MCF 10A (cell line): ENCODE measurements at regions of chr12 and their contacts with region 1.

Region 1: GRCh38 chr12:79420146-79420618 is 270.6 kb downstream of the PAWR start:
- DNase-seq: peak; percentile 79
- H3K4me3 Mint-ChIP-seq: no peak overlapping the region
- H3K27ac Mint-ChIP-seq: peak overlapping the region; percentile 49
- H3K4me1 Mint-ChIP-seq: peaks cover 43% of the 10 kb centered on the region
- H3K27me3 Mint-ChIP-seq: no peaks in the 10 kb centered on the region
- CTCF ChIP-seq: peak; percentile 58

Region 2: GRCh38 chr12:79217306-79217705 is 202.9 kb before region 1 on chr12:
- CTCF ChIA-PET with region 1: no interaction called
- POLR2A ChIA-PET with region 1: no interaction called
- intact Hi-C with region 1: no loop called
- DNase-seq: no peak
- H3K4me3 Mint-ChIP-seq: no peak overlapping the region
- H3K27ac Mint-ChIP-seq: no peak overlapping the region
- H3K4me1 Mint-ChIP-seq: no peaks in the 10 kb centered on the region
- H3K27me3 Mint-ChIP-seq: no peaks in the 10 kb centered on the region
- CTCF ChIP-seq: no peak

Region 3: GRCh38 chr12:79262938-79263337 is 157.2 kb before region 1 on chr12:
- CTCF ChIA-PET with region 1: no interaction called
- POLR2A ChIA-PET with region 1: no interaction called
- intact Hi-C with region 1: no loop called
- DNase-seq: peak; percentile 11
- H3K4me3 Mint-ChIP-seq: no peak overlapping the region
- H3K27ac Mint-ChIP-seq: no peak overlapping the region
- H3K4me1 Mint-ChIP-seq: no peaks in the 10 kb centered on the region
- H3K27me3 Mint-ChIP-seq: no peaks in the 10 kb centered on the region
- CTCF ChIP-seq: no peak

Region 4: DNA sequence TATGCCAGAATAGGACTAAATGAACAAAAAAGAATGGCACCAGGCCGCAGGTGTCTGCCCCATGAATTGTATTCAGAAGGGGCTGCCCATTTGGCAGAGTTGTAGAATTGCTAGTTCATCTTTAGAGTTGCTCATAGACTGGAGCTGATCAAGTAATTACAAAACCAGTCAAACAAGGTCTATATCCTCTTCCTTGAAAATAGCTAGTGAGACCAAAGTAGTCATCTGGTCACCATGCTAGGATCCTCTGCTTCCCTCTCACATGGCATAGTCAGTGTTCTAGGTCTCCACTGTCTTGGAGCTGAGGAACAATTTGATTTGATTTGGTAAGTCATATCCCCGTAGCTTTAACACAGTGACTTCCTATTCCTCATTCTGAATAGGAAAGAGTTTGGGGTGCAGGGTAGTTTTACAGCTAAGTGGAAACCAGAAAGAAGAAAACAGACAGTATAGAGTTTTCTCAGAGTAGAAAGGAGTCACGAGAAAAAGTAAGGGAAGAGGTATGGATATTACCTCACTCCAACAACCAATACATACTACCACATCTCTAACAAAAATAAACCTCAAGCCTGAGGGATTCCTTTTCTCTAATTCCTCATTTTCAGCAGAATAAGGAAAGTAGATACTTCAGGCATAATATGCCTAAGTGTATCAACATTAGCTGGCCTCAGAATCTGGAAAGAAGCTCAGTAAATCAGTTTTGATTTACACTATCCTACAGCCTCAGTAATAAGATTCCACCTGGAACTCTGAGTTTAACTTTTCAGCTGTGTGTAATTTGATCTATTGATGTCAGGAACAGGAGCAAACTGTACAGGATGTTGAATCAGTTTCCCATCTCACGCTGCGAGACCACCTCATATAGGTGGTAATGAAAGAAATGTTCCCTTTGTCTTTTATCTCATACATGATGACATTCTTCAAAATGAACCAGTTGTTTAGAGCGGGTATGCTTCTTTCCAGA is 18.6 kb after region 1 on chr12:
- CTCF ChIA-PET with region 1: interaction called, 32 read pairs
- POLR2A ChIA-PET with region 1: interaction called, 5 read pairs
- intact Hi-C with region 1: no loop called
- DNase-seq: no peak
- H3K4me3 Mint-ChIP-seq: no peak overlapping the region
- H3K27ac Mint-ChIP-seq: no peak overlapping the region
- H3K4me1 Mint-ChIP-seq: peaks cover 8% of the 10 kb centered on the region
- H3K27me3 Mint-ChIP-seq: no peaks in the 10 kb centered on the region
- CTCF ChIP-seq: no peak

Region 5: DNA sequence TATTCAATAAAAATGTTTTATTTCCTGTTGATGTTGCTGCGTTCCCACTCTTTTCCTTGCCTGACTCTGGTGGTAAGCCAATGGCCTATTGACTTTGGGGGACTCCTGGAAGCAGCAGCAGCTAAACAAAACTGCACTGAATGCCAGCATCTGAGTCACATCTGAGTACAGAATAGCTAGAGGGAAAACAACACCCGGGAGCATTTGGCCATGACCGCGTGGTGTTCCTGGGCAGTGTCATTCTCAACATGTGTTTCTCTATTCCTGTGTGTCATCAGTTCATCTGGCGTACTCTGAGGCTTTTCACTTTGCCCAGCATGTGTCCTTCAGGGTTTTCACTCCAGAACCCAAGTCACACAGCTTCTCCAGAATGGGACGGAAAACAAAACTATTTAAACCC is 31.8 kb after region 1 on chr12:
- CTCF ChIA-PET with region 1: interaction called, 24 read pairs
- POLR2A ChIA-PET with region 1: interaction called, 4 read pairs
- intact Hi-C with region 1: no loop called
- DNase-seq: peak; percentile 94
- H3K4me3 Mint-ChIP-seq: peak overlapping the region; percentile 60
- H3K27ac Mint-ChIP-seq: peak overlapping the region; percentile 94
- H3K4me1 Mint-ChIP-seq: peaks cover 38% of the 10 kb centered on the region
- H3K27me3 Mint-ChIP-seq: no peaks in the 10 kb centered on the region
- CTCF ChIP-seq: no peak

Region 6: DNA sequence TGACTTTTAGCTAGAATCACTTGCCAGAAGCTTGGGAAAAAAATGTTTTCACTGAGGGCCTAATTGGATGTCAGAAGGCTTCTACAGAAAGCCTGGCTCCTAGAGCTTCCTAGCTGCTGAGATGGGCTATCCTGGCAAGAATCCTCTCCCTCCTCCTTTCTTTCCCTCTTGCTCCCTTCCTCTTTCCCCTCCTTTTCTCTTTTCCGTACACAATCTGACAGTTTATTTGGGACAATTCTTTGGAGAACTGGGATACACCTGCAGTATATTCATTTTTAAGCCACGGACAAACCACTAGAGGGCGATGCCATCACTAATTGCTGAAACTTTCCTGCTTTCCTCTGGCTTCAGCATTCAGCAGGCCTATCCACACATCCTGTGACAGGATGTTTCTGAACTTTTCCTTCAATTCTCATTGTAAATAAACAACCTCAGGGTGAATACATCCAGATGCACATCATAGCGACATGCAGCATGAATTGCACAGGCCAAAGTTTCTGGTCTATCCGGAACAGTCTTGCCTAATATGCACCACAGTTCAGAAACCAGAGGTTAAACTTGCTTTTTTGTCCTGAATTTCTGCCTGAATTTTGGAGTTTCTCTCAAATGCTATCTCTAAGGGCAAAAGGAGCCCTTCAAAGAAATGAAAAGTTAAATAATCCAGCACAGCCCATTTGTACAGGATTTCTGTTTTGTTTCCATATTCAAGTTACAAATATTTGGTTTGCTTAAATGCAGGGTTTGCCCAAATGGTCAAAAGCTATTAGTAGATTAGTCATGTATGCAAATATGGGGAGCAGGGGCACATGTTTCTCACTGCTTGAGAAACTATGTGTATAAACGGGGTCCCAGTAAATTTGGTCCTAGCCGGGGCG is 127.8 kb after region 1 on chr12:
- CTCF ChIA-PET with region 1: interaction called, 43 read pairs
- POLR2A ChIA-PET with region 1: interaction called, 24 read pairs
- intact Hi-C with region 1: loop called (anchors 1 kb)
- DNase-seq: peak; percentile 79
- H3K4me3 Mint-ChIP-seq: peak overlapping the region; percentile 51
- H3K27ac Mint-ChIP-seq: peak overlapping the region; percentile 44
- H3K4me1 Mint-ChIP-seq: peaks cover 66% of the 10 kb centered on the region
- H3K27me3 Mint-ChIP-seq: no peaks in the 10 kb centered on the region
- CTCF ChIP-seq: peak; percentile 63

Region 7: GRCh38 chr12:80186727-80187217 is 766.6 kb after region 1 on chr12:
- CTCF ChIA-PET with region 1: interaction called, 5 read pairs
- POLR2A ChIA-PET with region 1: no interaction called
- intact Hi-C with region 1: loop called (anchors 5 kb)
- DNase-seq: peak; percentile 88
- H3K4me3 Mint-ChIP-seq: no peak overlapping the region
- H3K27ac Mint-ChIP-seq: no peak overlapping the region
- H3K4me1 Mint-ChIP-seq: peaks cover 19% of the 10 kb centered on the region
- H3K27me3 Mint-ChIP-seq: no peaks in the 10 kb centered on the region
- CTCF ChIP-seq: peak; percentile 78